ENCODE measurements at regions of chr2 and their contacts with region 1.

Region 1: GRCh38 chr2:677056-677965 is at the start of gene TMEM18:
- DNase-seq: peak; percentile 98
- H3K4me3 ChIP-seq: peak within 1 kb of the TSS; percentile 87 to 94 (median 88)
- H3K27ac ChIP-seq: peak within 1 kb of the TSS; percentile 98 to 100 (median 98)
- H3K4me1 ChIP-seq: peaks cover 0 to 24% (median 13%) of the 10 kb centered on the region in 4 donors
- H3K27me3 ChIP-seq: no peaks in the 10 kb centered on the region
- CTCF ChIP-seq: peak in 2 of 4 experiments; percentile 13 to 30
- EP300 ChIP-seq: no peak
- POLR2A ChIP-seq: peak; percentile 75 to 84
- total RNA-seq, gene TMEM18: 14.4 to 26.8 (median 21.9) TPM

Region 2: GRCh38 chr2:264660-265468 is 412.4 kb before region 1 on chr2 and contains the start of gene ACP1:
- intact Hi-C with region 1: loop called (anchors 2 kb)
- DNase-seq: peak; percentile 96
- H3K4me3 ChIP-seq: peak within 1 kb of the TSS; percentile 63 to 78 (median 70)
- H3K27ac ChIP-seq: peak within 1 kb of the TSS; percentile 71 to 82 (median 77)
- H3K4me1 ChIP-seq: peaks cover 0 to 30% (median 27%) of the 10 kb centered on the region in 4 donors
- H3K27me3 ChIP-seq: no peaks in the 10 kb centered on the region
- CTCF ChIP-seq: no peak
- EP300 ChIP-seq: no peak
- POLR2A ChIP-seq: peak; percentile 63 to 64
- total RNA-seq, gene ACP1: 62.6 to 86.9 (median 82.4) TPM

Region 3: DNA sequence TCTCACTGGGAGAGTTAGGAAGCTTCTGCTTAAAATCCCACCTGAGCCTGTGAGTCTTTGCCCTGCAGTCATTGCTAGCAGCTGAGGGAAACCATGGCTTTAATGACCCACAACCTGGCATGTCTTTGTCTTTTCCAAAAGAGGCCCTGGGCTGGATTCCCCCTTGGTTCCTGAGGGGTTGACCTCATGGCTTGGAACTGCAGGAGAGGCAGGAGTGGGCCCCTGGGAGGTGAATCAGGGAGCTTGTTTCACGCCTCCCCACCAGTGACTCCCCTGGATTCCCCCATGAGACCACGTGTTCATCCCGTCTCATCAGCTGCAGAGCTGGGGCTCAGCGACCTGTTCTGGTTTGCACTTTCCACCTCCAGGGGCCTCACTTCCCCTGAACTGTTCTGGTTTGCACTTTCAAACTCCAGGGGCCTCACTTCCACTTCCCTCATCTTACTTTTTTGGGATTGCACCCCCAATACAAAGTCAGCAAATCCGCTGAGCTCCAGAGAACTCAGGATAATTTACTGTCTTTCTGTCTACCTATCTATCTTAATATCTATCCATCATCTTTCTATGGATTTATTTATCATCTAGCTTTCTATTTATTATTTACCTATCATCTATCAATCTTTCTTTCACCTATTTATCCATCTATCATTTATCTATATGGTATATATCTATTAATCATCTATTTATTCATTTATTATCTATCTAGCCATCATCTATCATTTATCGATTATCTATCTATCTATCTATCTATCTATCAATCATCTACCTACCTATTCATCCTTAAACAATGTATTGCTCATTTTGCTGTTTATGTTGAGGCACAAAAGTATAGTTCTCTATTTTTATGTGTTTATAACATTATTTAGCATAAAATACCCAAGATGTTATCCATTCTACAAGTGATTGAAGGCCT is 58.6 kb after region 1 on chr2:
- intact Hi-C with region 1: loop called (anchors 1 kb)
- DNase-seq: no peak
- H3K4me3 ChIP-seq: no peak overlapping the region
- H3K27ac ChIP-seq: no peak overlapping the region
- H3K4me1 ChIP-seq: peaks cover 0 to 18% (median 9%) of the 10 kb centered on the region in 4 donors
- H3K27me3 ChIP-seq: peaks cover 0 to 6% (median 0%) of the 10 kb centered on the region in 3 donors
- CTCF ChIP-seq: no peak
- EP300 ChIP-seq: no peak
- POLR2A ChIP-seq: no peak

Region 4: DNA sequence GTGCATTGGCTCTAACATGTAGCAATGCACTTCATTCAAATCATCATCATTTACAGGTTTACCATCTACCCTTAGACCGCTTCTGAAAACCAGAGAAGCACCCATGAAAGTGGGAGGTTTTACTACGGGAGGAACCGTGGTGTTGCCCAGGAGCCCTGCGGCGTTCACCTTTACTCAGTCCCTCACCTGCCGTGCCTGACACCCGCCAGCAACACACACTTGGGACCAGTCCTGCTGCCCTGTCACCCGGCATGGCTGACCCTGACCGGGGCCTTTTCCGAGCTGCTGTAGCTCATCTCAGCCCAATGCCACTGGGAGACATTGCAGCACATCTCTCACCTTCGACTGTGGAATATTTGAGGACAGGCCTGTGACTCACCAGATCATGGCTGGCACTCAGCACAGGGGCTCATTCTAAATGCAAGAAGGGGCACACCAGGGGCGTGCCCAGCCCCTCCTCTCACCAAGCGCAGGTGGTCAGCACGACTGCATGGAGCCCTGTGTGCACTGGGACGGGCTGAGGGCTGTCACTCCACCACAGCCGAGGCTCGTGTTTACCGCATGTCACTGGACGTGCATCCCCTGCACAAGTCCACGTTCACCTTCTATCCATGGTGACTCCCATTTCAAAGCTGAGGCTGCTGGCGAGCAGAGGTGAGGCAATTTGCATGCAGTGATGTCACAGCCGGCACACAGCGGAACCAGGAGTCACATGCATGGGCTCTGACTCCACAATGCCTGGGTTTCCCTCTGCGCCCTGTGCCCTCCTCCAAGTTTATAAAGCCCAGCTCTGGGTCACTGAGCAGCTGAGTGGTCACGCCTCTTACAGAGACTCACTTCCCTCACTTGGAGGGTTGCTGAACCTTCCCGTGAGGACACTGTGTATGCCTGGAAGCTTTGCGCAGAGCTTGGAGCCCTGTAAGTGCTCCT is 196.6 kb after region 1 on chr2:
- intact Hi-C with region 1: no loop called
- DNase-seq: no peak
- H3K4me3 ChIP-seq: no peak overlapping the region
- H3K27ac ChIP-seq: no peak overlapping the region
- H3K4me1 ChIP-seq: no peaks in the 10 kb centered on the region
- H3K27me3 ChIP-seq: peaks cover 0 to 29% (median 15%) of the 10 kb centered on the region in 3 donors
- CTCF ChIP-seq: no peak
- EP300 ChIP-seq: no peak
- POLR2A ChIP-seq: no peak

Measured in sigmoid colon (tissue), 7 donors.